Activated naive CD4-positive, alpha-beta T cell treated with anti-CD3 and anti-CD28 coated beads for 36 hours (primary cell): ENCODE measurements at regions of chr1 and their contacts with region 1.

Region 1: DNA sequence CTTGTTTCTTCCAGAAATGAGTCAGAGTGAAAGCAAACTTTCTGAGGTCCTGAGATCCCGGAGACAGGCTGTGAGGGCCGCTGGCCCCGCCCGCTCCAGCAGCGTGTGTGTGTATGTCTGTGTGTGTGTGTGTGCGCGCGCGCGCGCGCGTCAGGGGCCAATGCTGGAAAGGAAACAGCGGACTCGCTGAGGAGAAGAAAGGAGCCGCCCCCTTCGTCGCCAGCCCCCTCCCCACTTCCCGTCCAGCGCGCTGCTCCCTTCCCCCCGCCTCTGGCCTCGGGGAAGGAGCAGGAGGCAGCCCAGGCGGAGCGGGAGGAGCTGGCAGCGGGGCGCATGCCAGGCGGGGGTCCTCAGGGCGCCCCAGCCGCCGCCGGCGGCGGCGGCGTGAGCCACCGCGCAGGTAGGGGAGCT is at the start of gene DISC1:
- DNase-seq: peak; percentile 76
- H3K4me3 Mint-ChIP-seq: peak within 1 kb of the TSS; percentile 82
- H3K27ac Mint-ChIP-seq: peak within 1 kb of the TSS; percentile 78
- H3K4me1 Mint-ChIP-seq: peaks cover 28% of the 10 kb centered on the region
- H3K27me3 Mint-ChIP-seq: no peaks in the 10 kb centered on the region
- total RNA-seq, gene DISC1: 4.8 to 5.0 TPM

Region 2: GRCh38 chr1:231612393-231613089 is 14.0 kb before region 1 on chr1:
- CTCF ChIA-PET with region 1: interaction called, 8 read pairs
- intact Hi-C with region 1: loop called (anchors 1 kb)
- DNase-seq: peak; percentile 82
- H3K4me3 Mint-ChIP-seq: peak overlapping the region; percentile 41
- H3K27ac Mint-ChIP-seq: peak overlapping the region; percentile 83
- H3K4me1 Mint-ChIP-seq: peaks cover 46% of the 10 kb centered on the region
- H3K27me3 Mint-ChIP-seq: no peaks in the 10 kb centered on the region

Region 3: GRCh38 chr1:231643071-231643934 is 16.8 kb after region 1 on chr1:
- CTCF ChIA-PET with region 1: no interaction called
- intact Hi-C with region 1: loop called (anchors 2 kb)
- DNase-seq: no peak
- H3K4me3 Mint-ChIP-seq: no peak overlapping the region
- H3K27ac Mint-ChIP-seq: no peak overlapping the region
- H3K4me1 Mint-ChIP-seq: peaks cover 18% of the 10 kb centered on the region
- H3K27me3 Mint-ChIP-seq: no peaks in the 10 kb centered on the region

Region 4: GRCh38 chr1:231699784-231700183 is 73.2 kb after region 1 on chr1:
- CTCF ChIA-PET with region 1: no interaction called
- intact Hi-C with region 1: loop called (anchors 2 kb)
- DNase-seq: no peak
- H3K4me3 Mint-ChIP-seq: no peak overlapping the region
- H3K27ac Mint-ChIP-seq: peak overlapping the region; percentile 20
- H3K4me1 Mint-ChIP-seq: peaks cover 12% of the 10 kb centered on the region
- H3K27me3 Mint-ChIP-seq: no peaks in the 10 kb centered on the region

Region 5: DNA sequence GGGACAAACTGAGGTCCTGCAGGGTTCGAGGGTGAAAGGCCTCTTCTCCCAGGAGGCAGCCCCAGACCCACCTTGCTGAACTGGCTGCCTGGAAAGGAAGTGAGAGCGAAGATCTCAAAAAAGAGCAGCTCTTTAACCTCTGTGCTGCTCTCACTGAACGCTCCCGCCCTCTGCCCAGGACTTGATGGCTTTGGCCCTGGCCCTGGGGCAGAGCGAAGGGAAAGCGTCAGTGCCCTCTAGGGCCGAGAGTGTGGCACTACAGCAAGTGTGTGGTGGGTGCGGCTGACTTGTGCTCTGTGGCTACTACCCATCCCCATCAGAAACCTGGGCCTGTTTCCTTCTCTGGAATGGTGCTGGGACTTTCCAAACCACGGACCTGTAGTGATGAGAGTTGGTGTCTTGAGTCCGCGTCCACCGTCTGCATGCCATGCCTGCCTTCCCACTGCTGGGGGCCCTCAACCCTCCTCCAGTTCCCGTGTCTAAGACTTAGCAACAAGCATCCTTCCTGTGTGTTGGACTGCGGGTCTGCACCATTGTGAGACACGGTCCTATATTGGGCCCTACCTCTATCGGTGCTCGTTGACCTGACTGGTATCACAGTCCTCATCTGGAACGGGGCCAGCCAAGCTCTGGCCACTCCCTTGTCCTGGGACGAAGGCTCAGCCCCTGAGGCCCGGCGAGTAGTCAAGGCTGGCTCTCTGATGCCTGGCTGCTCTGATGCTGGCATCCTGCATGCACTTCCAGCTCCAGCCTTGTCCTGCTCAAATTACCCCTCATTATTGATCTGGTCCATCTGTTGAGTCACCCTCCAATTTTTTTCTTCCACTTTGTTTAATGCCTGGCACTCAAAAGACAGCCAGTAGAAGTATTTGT is 180.3 kb after region 1 on chr1:
- CTCF ChIA-PET with region 1: no interaction called
- intact Hi-C with region 1: loop called (anchors 10 kb)
- DNase-seq: peak; percentile 58
- H3K4me3 Mint-ChIP-seq: no peak overlapping the region
- H3K27ac Mint-ChIP-seq: no peak overlapping the region
- H3K4me1 Mint-ChIP-seq: no peaks in the 10 kb centered on the region
- H3K27me3 Mint-ChIP-seq: no peaks in the 10 kb centered on the region

Region 6: DNA sequence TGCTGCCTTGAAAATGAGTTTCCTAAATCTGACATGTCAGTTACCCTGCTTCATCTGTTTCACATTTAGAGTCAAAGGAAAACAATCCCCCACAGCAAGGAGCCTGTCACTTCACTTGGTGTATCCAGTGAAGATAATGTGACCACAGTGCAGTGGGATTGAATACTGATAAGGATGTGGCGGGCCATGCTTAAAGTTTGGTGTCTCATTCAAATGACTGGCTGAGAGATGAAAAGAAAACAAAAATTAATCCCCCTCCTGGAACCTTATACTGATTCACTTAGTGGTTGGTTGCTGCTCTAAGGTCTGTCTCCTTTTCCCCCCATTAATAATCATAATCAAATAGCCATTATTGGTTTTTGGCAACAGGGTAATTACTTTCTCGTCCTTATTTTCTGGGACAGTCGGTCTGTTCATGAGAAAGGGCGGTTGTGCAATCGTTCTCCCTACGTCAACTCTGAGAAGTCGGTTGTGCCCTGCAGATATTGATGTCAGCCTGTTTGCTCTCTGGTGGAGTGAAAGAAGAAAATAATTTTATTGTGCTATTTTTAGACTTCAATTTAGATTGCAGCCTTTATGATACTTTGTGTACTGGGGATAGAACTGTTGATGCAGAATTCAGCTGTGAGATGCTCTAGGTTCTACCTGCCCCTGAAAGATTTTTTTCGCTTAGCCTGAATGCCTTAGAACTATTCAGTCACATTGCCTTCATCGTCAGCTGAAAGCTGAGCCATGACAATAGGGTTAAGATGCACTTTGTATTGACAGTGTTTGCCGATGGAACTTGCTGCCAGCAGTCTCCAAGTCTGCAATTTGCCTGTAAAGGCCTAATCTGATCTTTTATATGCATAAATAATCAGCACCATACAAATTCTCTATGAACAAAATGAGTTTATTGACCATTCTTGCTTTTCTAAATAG is 360.4 kb after region 1 on chr1:
- CTCF ChIA-PET with region 1: no interaction called
- intact Hi-C with region 1: no loop called
- DNase-seq: no peak
- H3K4me3 Mint-ChIP-seq: no peak overlapping the region
- H3K27ac Mint-ChIP-seq: no peak overlapping the region
- H3K4me1 Mint-ChIP-seq: peaks cover 2% of the 10 kb centered on the region
- H3K27me3 Mint-ChIP-seq: no peaks in the 10 kb centered on the region

Region 7: GRCh38 chr1:232153652-232154051 is 527.1 kb after region 1 on chr1:
- CTCF ChIA-PET with region 1: no interaction called
- intact Hi-C with region 1: no loop called
- DNase-seq: no peak
- H3K4me3 Mint-ChIP-seq: no peak overlapping the region
- H3K27ac Mint-ChIP-seq: no peak overlapping the region
- H3K4me1 Mint-ChIP-seq: no peaks in the 10 kb centered on the region
- H3K27me3 Mint-ChIP-seq: no peaks in the 10 kb centered on the region